HAP-1 (cell line): ENCODE measurements at regions of chr1 and their contacts with region 1.

Region 1: GRCh38 chr1:8015036-8015808 is 10.9 kb downstream of the ERRFI1 start:
- DNase-seq: peak; percentile 67 to 70
- H3K4me3 ChIP-seq: no peak overlapping the region
- H3K4me1 ChIP-seq: peaks cover 19% of the 10 kb centered on the region
- H3K27me3 ChIP-seq: peaks cover 3% of the 10 kb centered on the region; the same call in 1 of the 2 replicates

Region 2: DNA sequence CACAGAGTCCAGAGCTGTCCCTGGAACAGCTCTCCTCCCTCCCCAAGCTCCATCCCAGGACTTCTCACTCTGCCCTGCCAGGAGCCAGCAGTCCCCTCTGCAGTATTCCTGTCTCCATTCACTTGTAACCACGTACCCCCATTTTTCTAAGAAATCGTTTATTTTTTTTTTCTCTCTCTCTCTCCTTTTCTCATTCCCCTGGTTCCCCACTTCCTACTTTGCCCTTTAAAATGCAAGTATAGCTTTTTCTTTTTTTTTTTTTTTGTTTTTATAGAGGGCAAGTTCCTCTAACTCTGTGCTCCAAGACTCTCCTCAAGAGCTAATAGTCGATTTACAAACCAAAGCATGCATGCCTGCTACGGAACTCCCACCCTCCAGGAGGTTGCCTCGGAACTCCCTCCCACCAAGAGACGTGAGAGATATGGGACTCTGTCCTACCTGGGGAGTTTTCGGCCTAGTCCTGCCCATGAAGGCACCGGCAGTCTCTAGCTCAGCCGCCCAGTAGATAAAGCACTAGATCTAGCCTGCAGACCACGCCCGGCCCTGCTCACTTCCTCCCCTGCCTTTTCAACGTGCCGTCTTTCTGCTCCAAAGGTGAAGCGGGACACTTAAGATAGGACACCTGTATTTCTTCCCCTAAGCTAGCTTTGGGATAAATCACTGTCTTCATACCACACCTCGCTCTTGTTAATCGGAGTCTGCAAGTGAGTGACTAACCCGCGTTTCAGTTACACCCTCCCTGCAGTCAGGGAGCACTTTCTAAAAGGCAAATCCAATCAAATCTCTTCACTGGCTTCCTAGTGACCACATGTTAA is 102.3 kb before region 1 on chr1:
- in situ Hi-C with region 1: no loop called
- DNase-seq: no peak
- H3K4me3 ChIP-seq: no peak overlapping the region
- H3K4me1 ChIP-seq: no peaks in the 10 kb centered on the region
- H3K27me3 ChIP-seq: peaks cover 3% of the 10 kb centered on the region; the same call in 1 of the 2 replicates

Region 3: DNA sequence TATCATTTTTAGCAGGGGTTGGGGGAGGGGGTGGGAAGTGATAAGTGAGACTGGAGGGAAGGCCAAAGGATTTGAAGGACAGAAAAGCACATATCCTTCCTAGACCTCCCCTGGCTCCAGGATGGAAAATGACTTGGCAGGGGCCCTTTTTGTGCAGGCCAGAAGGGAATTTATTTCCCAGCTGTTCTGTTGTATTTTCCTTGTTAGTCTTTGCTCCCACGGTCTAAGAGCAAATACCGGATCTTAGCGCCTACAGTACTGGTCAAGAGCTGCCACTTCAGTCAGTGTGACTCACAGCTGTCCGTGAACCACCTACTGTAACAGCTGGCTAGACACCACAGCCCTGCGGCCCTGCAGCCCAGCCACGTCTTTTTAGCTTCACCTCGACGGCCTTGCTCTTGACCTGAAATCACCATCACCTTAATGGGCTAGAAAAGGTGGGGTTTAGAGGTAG is 61.9 kb after region 1 on chr1:
- in situ Hi-C with region 1: no loop called
- DNase-seq: no peak
- H3K4me3 ChIP-seq: no peak overlapping the region
- H3K4me1 ChIP-seq: no peaks in the 10 kb centered on the region; the same call in 1 of the 2 replicates
- H3K27me3 ChIP-seq: no peaks in the 10 kb centered on the region

Region 4: DNA sequence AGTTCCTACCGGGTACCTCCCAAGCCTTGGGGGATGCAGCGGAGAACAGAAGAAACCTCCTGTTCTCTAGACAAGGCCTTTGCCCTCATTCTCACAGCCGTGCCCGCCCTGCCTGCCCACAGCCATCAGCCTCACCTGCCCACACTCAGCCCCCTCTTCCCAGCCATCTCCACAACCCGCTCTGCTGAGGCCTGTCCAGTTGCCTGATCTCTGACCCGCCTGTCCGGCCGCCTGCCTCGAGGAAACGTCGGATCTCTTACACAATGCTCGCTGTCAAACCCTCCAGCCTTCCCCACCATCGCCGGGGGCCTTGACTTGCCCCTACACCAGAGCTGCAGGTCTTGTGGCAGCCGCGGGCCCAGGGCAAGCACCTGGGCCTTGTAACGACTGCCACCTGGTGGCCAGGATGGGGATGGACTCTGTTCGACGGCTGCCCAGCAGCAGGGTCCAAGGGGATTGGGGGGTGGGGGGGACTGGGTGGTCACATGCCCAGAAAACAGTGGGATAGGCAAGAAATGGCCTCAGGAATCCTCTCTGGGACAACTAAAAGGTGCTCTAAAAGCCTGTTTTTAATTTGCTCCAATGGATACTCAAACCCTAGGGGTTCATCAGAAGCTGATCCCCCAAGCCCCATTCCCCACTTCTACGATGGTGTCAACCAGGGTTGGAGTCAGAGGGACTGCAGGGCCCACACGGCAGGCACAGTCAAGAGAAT is 333.7 kb after region 1 on chr1:
- in situ Hi-C with region 1: loop called (anchors 10 kb)
- DNase-seq: peak in 1 of 2 experiments; percentile 82
- H3K4me3 ChIP-seq: no peak overlapping the region
- H3K4me1 ChIP-seq: no peaks in the 10 kb centered on the region
- H3K27me3 ChIP-seq: no peaks in the 10 kb centered on the region

Region 5: DNA sequence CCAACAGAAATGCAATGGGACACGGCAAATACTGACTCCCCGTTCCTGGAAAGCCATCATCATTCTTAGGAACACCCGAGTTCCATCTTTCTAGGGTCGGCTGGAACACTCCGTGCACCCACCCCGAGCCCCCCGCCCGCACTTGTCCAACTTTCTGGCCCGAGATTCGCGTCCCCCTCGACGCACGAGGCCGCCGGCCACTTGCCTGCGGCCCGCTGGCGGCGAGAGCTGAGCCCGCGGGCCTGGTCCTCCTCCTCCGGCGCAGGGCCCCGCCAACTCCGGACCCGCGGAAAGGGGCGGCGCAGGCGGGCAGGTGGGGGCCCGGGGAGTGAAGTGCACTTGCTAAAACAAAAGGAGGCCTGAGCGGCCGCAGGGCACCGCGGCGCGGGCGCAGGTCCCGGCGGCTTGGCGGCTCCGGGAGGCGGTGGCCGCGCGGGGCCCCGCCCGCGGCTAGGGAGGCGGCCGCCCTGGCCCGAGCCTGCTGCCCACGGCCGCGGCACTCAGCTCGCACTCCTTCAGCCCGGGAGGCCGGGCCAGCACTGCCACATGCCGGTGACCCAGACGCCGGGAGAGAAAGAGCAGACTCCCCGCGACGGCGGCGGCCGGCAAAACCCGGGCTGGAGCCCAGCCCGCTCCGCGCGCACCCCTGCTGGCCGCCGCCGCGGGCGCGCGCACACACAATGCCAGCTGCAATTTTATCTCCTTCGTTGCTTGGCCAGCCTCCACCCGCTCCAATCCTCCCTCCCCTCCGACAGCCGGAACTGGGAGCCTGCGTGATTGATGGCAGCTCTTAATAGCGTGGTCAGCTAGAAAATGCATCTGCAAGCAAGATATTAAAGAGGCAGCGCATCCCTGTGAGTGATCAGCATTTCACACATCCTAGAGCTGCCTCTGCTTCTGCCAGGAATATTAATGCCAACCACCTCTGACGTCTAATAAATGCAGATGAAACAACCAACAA is 687.9 kb after region 1 on chr1:
- in situ Hi-C with region 1: loop called (anchors 25 kb)
- DNase-seq: peak; percentile 87 to 93
- H3K4me3 ChIP-seq: peak overlapping the region; percentile 36
- H3K4me1 ChIP-seq: peaks cover 47% of the 10 kb centered on the region
- H3K27me3 ChIP-seq: no peaks in the 10 kb centered on the region